Activated naive CD4-positive, alpha-beta T cell treated with anti-CD3 and anti-CD28 coated beads for 36 hours (primary cell): ENCODE measurements at regions of chr1 and their contacts with region 1.

Region 1: GRCh38 chr1:19169642-19170041 is 40.4 kb downstream of the UBR4 start:
- DNase-seq: no peak
- H3K4me3 Mint-ChIP-seq: no peak overlapping the region
- H3K27ac Mint-ChIP-seq: peak overlapping the region; percentile 92
- H3K4me1 Mint-ChIP-seq: peaks cover 25% of the 10 kb centered on the region
- H3K27me3 Mint-ChIP-seq: no peaks in the 10 kb centered on the region

Region 2: GRCh38 chr1:19029191-19030105 is 140.2 kb before region 1 on chr1:
- CTCF ChIA-PET with region 1: no interaction called
- intact Hi-C with region 1: no loop called
- DNase-seq: peak; percentile 5
- H3K4me3 Mint-ChIP-seq: no peak overlapping the region
- H3K27ac Mint-ChIP-seq: no peak overlapping the region
- H3K4me1 Mint-ChIP-seq: peaks cover 3% of the 10 kb centered on the region
- H3K27me3 Mint-ChIP-seq: peaks cover 4% of the 10 kb centered on the region

Region 3: GRCh38 chr1:19179597-19180264 is 10.1 kb after region 1 on chr1:
- CTCF ChIA-PET with region 1: interaction called, 10 read pairs
- intact Hi-C with region 1: no loop called
- DNase-seq: peak; percentile 52
- H3K4me3 Mint-ChIP-seq: no peak overlapping the region
- H3K27ac Mint-ChIP-seq: peak overlapping the region; percentile 54
- H3K4me1 Mint-ChIP-seq: peaks cover 18% of the 10 kb centered on the region
- H3K27me3 Mint-ChIP-seq: no peaks in the 10 kb centered on the region

Region 4: GRCh38 chr1:19186001-19186400 is 16.4 kb after region 1 on chr1:
- CTCF ChIA-PET with region 1: no interaction called
- intact Hi-C with region 1: loop called (anchors 1 kb)
- DNase-seq: no peak
- H3K4me3 Mint-ChIP-seq: no peak overlapping the region
- H3K27ac Mint-ChIP-seq: peak overlapping the region; percentile 86
- H3K4me1 Mint-ChIP-seq: peaks cover 27% of the 10 kb centered on the region
- H3K27me3 Mint-ChIP-seq: no peaks in the 10 kb centered on the region

Region 5: DNA sequence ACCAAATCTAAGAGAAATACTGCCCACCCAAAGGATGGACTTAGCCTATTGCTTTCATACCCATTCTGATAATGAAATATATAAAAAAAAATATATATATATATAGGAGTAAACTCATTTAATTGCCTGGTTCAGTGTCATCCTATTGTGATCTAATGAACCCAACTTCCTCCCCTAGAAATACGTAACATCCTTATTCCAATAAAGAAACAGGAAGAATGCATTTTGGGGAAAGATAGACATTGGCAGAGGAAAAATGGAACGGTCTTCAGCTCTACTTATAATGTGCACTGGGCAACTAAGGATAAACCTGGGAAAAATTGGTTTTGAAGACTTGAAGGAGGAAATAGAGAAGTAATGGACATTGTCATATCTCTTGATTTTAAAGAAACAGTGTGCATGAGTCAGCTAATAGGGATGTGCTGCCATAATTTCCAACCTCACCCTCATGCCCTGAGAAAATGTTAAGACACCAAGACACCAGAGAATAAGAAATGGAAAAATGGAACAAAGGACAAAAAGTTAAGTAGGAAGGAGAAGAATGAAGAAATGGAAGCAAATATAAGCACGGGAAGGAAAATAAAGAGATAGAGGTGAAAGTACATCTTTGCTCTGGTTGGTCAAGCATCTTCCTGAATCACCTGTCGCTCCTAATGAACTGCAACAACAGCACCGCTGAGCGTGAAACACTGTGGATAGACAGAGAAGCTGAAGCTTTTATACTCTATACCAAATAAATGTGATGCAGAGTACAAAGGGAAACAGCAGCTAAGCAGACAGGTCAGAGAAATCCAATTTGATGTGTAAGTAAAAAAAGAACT is 35.0 kb after region 1 on chr1:
- CTCF ChIA-PET with region 1: interaction called, 3 read pairs
- intact Hi-C with region 1: loop called (anchors 1 kb)
- DNase-seq: no peak
- H3K4me3 Mint-ChIP-seq: no peak overlapping the region
- H3K27ac Mint-ChIP-seq: no peak overlapping the region
- H3K4me1 Mint-ChIP-seq: peaks cover 70% of the 10 kb centered on the region
- H3K27me3 Mint-ChIP-seq: no peaks in the 10 kb centered on the region

Region 6: DNA sequence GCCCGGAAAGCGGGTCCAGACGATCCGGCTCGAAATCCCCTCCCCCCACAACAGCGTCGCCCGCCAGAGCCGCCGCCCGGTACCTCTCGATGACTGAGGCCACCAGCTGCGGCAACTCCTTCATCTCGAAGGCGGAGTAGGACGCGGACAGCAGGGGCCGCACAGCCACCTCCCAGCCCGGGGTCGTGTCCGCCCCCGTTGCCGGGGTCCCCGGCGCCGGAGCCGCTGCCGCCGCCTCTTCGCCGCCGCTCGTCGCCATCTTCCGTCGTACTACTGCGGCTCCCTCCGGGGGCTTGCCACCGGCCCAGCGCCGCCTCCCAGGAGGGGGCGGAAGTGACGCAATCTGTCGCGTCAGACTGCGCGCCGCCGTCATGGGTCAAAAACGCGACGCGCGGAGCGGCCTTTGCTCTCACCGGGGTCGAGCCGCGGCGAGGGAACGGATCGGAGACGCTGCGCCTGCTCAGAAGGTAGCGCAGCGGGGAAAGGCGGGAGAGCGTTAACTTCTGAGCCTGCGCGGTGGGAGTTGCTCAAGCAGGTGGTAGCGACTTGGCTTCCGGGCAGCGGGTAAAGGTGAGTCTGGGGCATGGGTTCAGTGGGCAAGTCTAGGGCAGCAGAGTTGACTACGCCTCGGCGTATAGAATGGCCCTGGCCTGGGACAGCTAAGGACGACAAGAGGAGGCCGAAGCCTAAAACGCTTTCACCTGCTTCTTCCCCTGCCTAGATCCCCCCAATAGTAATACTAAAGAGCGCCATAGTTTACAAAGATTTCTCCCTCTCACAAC is 40.5 kb after region 1 on chr1 and contains the start of gene UBR4:
- CTCF ChIA-PET with region 1: interaction called, 3 read pairs
- intact Hi-C with region 1: loop called (anchors 1 kb)
- DNase-seq: peak; percentile 97
- H3K4me3 Mint-ChIP-seq: peak within 1 kb of the TSS; percentile 90
- H3K27ac Mint-ChIP-seq: peak within 1 kb of the TSS; percentile 95
- H3K4me1 Mint-ChIP-seq: peaks cover 69% of the 10 kb centered on the region
- H3K27me3 Mint-ChIP-seq: no peaks in the 10 kb centered on the region
- total RNA-seq, gene UBR4: 165 to 169 TPM

Region 7: DNA sequence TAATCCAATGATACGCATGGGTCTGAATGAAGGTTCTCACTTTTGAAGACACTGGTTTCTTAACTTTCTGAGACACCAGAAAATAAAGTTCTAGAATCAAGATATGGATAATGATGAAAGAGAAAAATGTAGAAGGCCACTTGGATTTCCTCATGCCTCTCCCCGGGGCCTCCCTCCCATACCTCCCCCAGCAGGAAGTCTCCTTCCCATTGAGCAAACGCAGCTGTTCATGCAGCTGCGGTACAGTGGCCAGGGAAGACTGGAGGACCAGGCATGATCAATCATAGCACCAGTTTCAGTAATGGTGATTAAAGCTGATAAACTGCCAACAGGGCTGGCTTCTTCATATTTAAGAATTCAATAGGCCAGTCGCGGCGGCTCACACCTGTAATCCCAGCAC is 51.3 kb after region 1 on chr1:
- CTCF ChIA-PET with region 1: no interaction called
- intact Hi-C with region 1: no loop called
- DNase-seq: no peak
- H3K4me3 Mint-ChIP-seq: no peak overlapping the region
- H3K27ac Mint-ChIP-seq: peak overlapping the region; percentile 63
- H3K4me1 Mint-ChIP-seq: peaks cover 17% of the 10 kb centered on the region
- H3K27me3 Mint-ChIP-seq: no peaks in the 10 kb centered on the region